Naive thymus-derived CD4-positive, alpha-beta T cell (primary cell): ENCODE measurements at regions of chr1 and their contacts with region 1.

Region 1: GRCh38 chr1:3069491-3070303 is 694 bp downstream of the PRDM16 start:
- DNase-seq: peak in 1 of 9 donors; percentile 9
- ATAC-seq: peak; percentile 17
- H3K4me3 ChIP-seq: no peak overlapping the region
- H3K4me3 Mint-ChIP-seq: peak overlapping the region in 8 of 10 donors; percentile 27 to 92 (median 65)
- H3K27ac ChIP-seq: no peak overlapping the region
- H3K27ac Mint-ChIP-seq: no peak overlapping the region
- H3K4me1 ChIP-seq: no peaks in the 10 kb centered on the region
- H3K4me1 Mint-ChIP-seq: peaks cover 0 to 7% (median 2%) of the 10 kb centered on the region in 7 donors
- H3K27me3 ChIP-seq: no peaks in the 10 kb centered on the region
- H3K27me3 Mint-ChIP-seq: peaks cover 0 to 36% (median 14%) of the 10 kb centered on the region in 5 donors

Region 2: GRCh38 chr1:3012456-3013291 is 57.0 kb before region 1 on chr1:
- CTCF ChIA-PET with region 1: no interaction called
- POLR2A ChIA-PET with region 1: no interaction called
- intact Hi-C with region 1: loop called in 1 of 2 experiments (anchors 10 kb)
- DNase-seq: peak in 8 of 9 donors; percentile 11 to 54 (median 34)
- ATAC-seq: peak; percentile 73
- H3K4me3 ChIP-seq: no peak overlapping the region
- H3K4me3 Mint-ChIP-seq: peak overlapping the region in 1 of 10 donors; percentile 60
- H3K27ac ChIP-seq: no peak overlapping the region
- H3K27ac Mint-ChIP-seq: peak overlapping the region in 1 of 9 donors; percentile 18
- H3K4me1 ChIP-seq: no peaks in the 10 kb centered on the region
- H3K4me1 Mint-ChIP-seq: peaks cover 0 to 6% (median 4%) of the 10 kb centered on the region in 7 donors
- H3K27me3 ChIP-seq: no peaks in the 10 kb centered on the region
- H3K27me3 Mint-ChIP-seq: peaks cover 0 to 21% (median 17%) of the 10 kb centered on the region in 5 donors

Region 3: DNA sequence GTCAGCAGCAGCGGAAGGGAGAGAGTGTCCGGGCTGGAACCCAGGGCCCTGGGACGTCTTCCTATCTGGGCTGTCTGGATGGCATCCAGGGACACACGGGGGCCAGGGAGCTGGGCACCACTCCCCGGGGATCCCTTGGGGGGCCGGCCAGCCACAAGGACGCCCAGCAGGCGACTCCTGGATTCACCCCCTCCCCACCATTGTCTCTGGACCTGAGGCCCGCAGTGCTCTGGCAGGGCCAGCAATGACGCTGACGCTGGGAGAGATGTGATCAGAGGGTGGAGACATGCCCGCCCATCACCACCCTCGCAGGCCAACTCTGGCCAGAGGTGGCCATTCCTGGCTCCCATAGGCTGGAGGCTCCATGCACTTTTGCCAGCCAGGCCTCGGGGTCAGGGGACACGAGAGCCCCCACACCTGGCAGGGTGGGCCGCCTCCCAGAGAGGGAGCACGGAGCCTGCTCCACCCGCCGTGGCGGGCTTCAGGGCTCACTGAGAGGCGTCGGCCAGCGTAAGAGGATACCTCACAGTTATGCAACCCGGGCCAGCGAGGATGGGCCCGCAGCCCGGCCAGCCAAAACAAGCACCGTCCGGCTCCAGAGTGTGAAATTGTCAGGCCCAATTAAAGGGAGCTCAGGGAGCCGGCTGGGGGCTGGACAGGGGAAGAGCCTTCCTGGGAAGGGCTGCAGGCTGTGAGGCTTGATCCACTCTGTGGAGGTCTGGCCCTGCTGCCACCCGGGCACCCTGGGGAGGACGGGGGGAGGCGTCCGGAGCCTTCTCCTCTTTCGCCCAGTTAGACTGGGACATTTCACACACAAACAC is 38.1 kb before region 1 on chr1:
- CTCF ChIA-PET with region 1: no interaction called
- POLR2A ChIA-PET with region 1: no interaction called
- intact Hi-C with region 1: loop called in 1 of 2 experiments (anchors 1 kb)
- DNase-seq: peak in 1 of 9 donors; percentile 6
- ATAC-seq: no peak
- H3K4me3 ChIP-seq: no peak overlapping the region
- H3K4me3 Mint-ChIP-seq: peak overlapping the region in 2 of 10 donors; percentile 56 to 59
- H3K27ac ChIP-seq: no peak overlapping the region
- H3K27ac Mint-ChIP-seq: peak overlapping the region in 2 of 9 donors; percentile 67 to 85
- H3K4me1 ChIP-seq: peaks cover 0 to 26% of the 10 kb centered on the region in 2 donors
- H3K4me1 Mint-ChIP-seq: peaks cover 5 to 35% (median 21%) of the 10 kb centered on the region in 7 donors
- H3K27me3 ChIP-seq: no peaks in the 10 kb centered on the region
- H3K27me3 Mint-ChIP-seq: peaks cover 0 to 2% (median 0%) of the 10 kb centered on the region in 5 donors

Region 4: DNA sequence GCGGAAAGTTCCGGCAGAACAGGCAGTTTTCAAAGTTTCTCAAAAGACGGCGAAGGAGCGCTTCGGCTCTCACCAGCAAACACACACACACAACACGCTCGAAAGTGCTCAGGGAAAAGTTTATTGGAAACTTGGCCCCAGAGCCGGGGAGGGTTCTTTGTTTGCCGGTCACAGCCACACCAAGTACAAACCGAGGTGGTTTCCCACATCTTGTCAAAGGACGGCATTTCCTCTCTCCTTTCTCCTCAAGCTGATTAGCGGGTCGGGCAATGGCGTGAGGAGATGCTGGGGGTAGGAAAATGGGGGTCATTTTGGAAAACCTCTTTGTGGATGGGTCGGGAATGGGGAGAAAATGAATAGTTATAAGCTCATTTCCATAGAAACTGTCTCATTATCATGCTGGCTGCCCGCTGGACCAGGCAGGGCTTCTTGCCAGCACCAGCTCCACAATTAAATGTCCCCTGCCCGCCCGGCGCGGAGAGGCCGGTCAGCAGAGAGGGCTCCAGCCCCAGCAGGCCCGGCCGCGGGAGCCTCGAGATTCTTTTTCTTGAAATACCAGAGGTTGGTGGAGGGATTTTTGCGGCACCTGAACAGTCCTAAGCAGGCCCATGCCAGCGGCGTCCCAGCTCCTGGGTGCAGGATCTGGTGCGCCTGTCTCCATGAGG is 91.6 kb after region 1 on chr1:
- CTCF ChIA-PET with region 1: no interaction called
- POLR2A ChIA-PET with region 1: no interaction called
- intact Hi-C with region 1: no loop called
- DNase-seq: peak in 2 of 9 donors; percentile 5 to 7
- ATAC-seq: no peak
- H3K4me3 ChIP-seq: peak overlapping the region; percentile 11
- H3K4me3 Mint-ChIP-seq: peak overlapping the region; percentile 23 to 84 (median 72)
- H3K27ac ChIP-seq: no peak overlapping the region
- H3K27ac Mint-ChIP-seq: no peak overlapping the region
- H3K4me1 ChIP-seq: peaks cover 0 to 3% of the 10 kb centered on the region in 2 donors
- H3K4me1 Mint-ChIP-seq: peaks cover 0 to 7% (median 2%) of the 10 kb centered on the region in 7 donors
- H3K27me3 ChIP-seq: no peaks in the 10 kb centered on the region
- H3K27me3 Mint-ChIP-seq: peaks cover 5 to 18% (median 12%) of the 10 kb centered on the region in 5 donors